ENCODE measurements at regions of chr9 and their contacts with region 1.

Region 1: GRCh38 chr9:2014696-2015580 is at the start of gene SMARCA2:
- DNase-seq: peak; percentile 98
- H3K4me3 ChIP-seq: peak within 1 kb of the TSS; percentile 74 to 87 (median 76)
- H3K27ac ChIP-seq: peak within 1 kb of the TSS; percentile 68
- H3K4me1 ChIP-seq: peaks cover 18% of the 10 kb centered on the region
- H3K27me3 ChIP-seq: no peaks in the 10 kb centered on the region
- CTCF ChIP-seq: no peak
- total RNA-seq, gene SMARCA2: 62.7 to 80.2 TPM

Region 2: GRCh38 chr9:1939926-1940368 is 75.0 kb before region 1 on chr9:
- CTCF ChIA-PET with region 1: no interaction called
- dilution Hi-C with region 1: no loop called
- in situ Hi-C with region 1: no loop called
- intact Hi-C with region 1: loop called (anchors 5 kb)
- DNase-seq: peak; percentile 30
- H3K4me3 ChIP-seq: no peak overlapping the region
- H3K27ac ChIP-seq: no peak overlapping the region
- H3K4me1 ChIP-seq: no peaks in the 10 kb centered on the region
- H3K27me3 ChIP-seq: no peaks in the 10 kb centered on the region
- CTCF ChIP-seq: peak; percentile 79 to 86

Region 3: DNA sequence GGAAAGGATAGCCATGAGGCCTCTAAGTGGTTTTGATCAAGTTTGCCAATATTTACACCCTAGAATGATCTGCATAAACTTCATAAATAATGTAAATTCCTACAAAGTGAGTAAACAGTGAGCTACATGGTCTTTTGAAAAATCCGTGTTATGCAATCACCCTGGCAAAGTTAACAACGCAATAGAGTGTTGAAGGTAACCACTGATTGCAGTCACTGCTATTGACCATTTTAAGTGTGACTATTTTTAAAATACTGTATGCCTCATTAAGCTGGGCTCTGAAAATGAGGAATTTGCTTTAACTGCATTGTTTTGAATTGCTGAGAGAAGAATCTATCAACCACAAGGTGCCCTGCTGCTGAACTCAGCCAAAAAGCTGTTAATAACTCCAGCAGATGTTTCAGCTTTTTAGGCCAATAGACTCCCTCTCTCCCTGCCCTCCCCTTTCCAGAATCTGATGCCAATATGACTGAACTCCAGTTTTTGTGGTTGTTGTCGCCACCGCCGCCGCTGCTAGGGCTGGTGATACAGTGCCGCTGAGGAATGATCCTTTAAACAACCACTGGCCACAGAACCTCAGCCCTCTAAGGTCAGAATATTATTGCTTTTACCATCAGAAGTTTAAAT is 35.1 kb before region 1 on chr9:
- CTCF ChIA-PET with region 1: no interaction called
- dilution Hi-C with region 1: no loop called
- in situ Hi-C with region 1: no loop called
- intact Hi-C with region 1: loop called (anchors 2 kb)
- DNase-seq: peak; percentile 56
- H3K4me3 ChIP-seq: no peak overlapping the region
- H3K27ac ChIP-seq: no peak overlapping the region
- H3K4me1 ChIP-seq: peaks cover 13% of the 10 kb centered on the region
- H3K27me3 ChIP-seq: no peaks in the 10 kb centered on the region
- CTCF ChIP-seq: no peak

Region 4: GRCh38 chr9:2066312-2067273 is 51.7 kb after region 1 on chr9:
- CTCF ChIA-PET with region 1: interaction called, 3 read pairs
- dilution Hi-C with region 1: no loop called
- in situ Hi-C with region 1: no loop called
- intact Hi-C with region 1: loop called (anchors 5 kb)
- DNase-seq: no peak
- H3K4me3 ChIP-seq: no peak overlapping the region
- H3K27ac ChIP-seq: no peak overlapping the region
- H3K4me1 ChIP-seq: no peaks in the 10 kb centered on the region
- H3K27me3 ChIP-seq: no peaks in the 10 kb centered on the region
- CTCF ChIP-seq: peak in 1 of 2 donors; percentile 25

Region 5: DNA sequence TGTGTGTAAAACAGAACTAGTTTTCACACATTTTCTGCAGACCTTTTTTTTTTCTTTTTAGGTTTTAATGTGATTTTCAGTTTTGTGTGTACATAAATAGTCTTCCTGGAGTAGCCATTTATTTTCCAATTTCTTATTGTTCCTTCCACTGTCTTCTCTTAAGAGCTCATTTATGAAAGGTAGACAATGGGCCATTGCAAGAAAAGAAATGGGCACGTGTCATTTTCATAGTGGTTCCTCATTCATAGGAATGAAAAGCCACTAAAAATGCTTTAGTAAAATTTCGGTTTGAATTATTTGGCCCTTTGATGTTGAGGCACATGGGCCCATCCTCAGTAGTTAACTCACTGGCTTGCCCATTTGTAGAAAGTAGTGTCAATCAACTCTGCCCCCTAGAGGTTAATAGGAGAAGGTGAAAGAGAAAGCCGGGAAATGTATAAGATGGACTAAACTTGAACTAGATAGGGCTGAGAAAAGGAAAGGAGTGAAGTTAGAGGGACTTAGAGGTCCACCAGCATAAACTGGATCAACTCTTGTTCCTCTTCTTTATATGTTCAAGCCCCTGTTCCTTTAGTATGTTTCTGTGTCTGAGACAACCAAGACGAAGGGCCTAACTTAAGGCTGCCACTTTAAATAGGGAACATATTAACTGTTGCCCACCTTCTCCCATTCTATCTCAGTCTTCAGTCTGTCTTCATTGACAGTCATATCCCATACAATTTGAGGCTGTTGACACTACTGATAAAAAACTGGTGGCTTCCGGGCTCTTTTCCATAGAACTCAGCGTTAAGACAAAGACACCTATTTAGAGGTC is 72.8 kb after region 1 on chr9:
- CTCF ChIA-PET with region 1: no interaction called
- dilution Hi-C with region 1: no loop called
- in situ Hi-C with region 1: no loop called
- intact Hi-C with region 1: loop called (anchors 5 kb)
- DNase-seq: peak; percentile 50
- H3K4me3 ChIP-seq: no peak overlapping the region
- H3K27ac ChIP-seq: no peak overlapping the region
- H3K4me1 ChIP-seq: no peaks in the 10 kb centered on the region
- H3K27me3 ChIP-seq: no peaks in the 10 kb centered on the region
- CTCF ChIP-seq: peak; percentile 67 to 77

Region 6: GRCh38 chr9:2158111-2158610 is 143.2 kb after region 1 on chr9:
- CTCF ChIA-PET with region 1: no interaction called
- dilution Hi-C with region 1: no loop called
- in situ Hi-C with region 1: no loop called
- intact Hi-C with region 1: loop called (anchors 2 kb)
- DNase-seq: peak; percentile 76
- H3K4me3 ChIP-seq: peak overlapping the region; percentile 49 to 77 (median 71)
- H3K27ac ChIP-seq: peak overlapping the region; percentile 84
- H3K4me1 ChIP-seq: peaks cover 42% of the 10 kb centered on the region
- H3K27me3 ChIP-seq: no peaks in the 10 kb centered on the region
- CTCF ChIP-seq: peak; percentile 2 to 7

Region 7: GRCh38 chr9:2704504-2704903 is 689.6 kb after region 1 on chr9:
- CTCF ChIA-PET with region 1: no interaction called
- dilution Hi-C with region 1: no loop called
- in situ Hi-C with region 1: no loop called
- intact Hi-C with region 1: no loop called
- DNase-seq: peak; percentile 5
- H3K4me3 ChIP-seq: no peak overlapping the region
- H3K27ac ChIP-seq: no peak overlapping the region
- H3K4me1 ChIP-seq: no peaks in the 10 kb centered on the region
- H3K27me3 ChIP-seq: no peaks in the 10 kb centered on the region
- CTCF ChIP-seq: no peak

Region 8: DNA sequence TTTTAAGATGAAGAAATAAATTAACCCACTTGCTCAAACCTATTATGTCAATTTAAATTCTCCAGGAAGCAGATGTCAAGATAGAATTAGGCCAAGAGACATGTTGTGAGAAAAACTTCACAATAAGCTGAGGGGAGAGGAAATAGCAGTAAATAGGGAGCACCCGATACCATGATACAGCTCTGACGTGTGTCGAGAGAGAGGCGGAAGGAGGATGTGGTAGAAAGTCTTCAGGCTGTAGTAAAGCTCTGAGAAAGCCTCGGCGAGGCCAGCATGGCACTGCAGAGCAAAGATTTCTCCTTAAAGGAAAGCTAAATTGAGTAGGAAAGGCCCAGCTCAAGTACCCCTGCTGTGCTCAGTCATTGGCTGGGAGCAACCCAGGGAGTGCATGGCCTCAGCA is 835.0 kb after region 1 on chr9:
- CTCF ChIA-PET with region 1: no interaction called
- dilution Hi-C with region 1: no loop called
- in situ Hi-C with region 1: no loop called
- intact Hi-C with region 1: loop called (anchors 10 kb)
- DNase-seq: no peak
- H3K4me3 ChIP-seq: no peak overlapping the region
- H3K27ac ChIP-seq: no peak overlapping the region
- H3K4me1 ChIP-seq: peaks cover 4% of the 10 kb centered on the region
- H3K27me3 ChIP-seq: peaks cover 2% of the 10 kb centered on the region
- CTCF ChIP-seq: no peak